ENCODE measurements at regions of chrX and their contacts with region 1.

Region 1: GRCh38 chrX:153763989-153764755 is at the start of gene PLXNB3:
- DNase-seq: peak; percentile 76 to 98 (median 88)

Region 2: DNA sequence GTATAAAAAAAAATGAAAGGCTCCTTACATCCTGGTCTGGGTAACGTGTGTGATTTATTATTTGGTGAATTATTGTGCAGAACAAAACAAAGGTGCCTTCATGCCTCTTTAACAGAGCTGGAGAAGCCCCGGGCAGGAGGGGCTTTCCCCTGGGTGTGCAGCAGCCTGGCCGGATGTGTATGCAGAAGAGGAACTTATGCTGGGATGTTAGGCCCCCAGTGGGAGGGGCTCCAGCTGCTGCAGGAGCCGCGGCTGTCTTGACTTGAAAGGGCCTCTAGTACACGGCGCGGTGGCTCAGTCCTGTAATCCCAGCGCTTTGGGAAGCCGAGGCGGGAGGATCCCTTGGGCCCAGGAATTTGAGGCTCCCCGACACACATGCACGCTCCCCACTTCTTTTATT is 181.3 kb before region 1 on chrX:
- intact Hi-C with region 1: no loop called
- DNase-seq: peak in 1 of 10 donors; percentile 59

Region 3: DNA sequence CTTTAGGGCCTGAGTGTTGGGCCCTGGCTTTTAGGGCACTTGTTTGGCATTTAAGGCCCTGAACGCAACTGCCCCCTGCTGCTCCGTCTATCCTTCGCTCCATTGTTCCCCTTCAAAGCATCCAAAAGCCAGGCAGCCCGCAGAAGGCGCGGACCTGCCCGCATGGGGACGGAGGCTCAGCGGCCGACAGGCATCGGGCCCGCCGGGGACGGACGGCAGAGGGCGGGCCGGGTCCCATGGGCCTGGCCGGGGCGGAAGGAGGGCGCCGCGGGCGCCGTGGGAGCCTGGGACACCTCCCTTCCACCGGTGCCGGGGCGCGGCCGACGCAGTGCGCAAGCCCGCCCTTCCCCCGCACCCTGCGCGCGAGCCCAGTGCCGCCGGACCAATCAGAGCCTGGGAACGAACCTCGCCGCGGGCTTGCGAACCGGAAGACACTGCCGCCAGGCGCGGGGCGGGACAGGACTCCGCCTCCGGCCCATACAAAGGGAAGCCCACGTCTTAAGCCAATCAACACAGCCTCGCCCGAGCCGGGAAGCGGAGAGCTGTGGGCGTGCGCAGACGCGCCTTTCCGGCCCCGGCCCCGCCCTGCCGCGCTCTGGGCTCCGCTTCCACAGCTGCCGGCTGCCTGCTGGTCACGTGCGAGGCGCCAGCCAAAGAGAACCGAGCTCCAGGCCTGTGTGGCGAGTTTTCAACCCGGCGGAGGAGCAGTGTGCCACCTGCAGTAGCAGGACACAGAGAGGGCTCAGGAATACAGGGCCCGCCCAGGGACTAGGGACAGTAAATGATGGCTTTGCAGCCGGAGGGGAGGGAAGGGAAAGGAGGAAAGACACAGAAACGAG is 164.0 kb after region 1 on chrX:
- intact Hi-C with region 1: loop called (anchors 1 kb)
- DNase-seq: peak; percentile 89 to 99 (median 92)

Region 4: GRCh38 chrX:153947009-153947769 is 183.0 kb after region 1 on chrX:
- intact Hi-C with region 1: loop called (anchors 1 kb)
- DNase-seq: peak in 9 of 10 donors; percentile 34 to 96 (median 62)